A549 (cell line): ENCODE measurements at regions of chr16 and their contacts with region 1.

Region 1: GRCh38 chr16:66924527-66925321 is 611 bp downstream of the RRAD start:
- DNase-seq: peak in 1 of 2 experiments; percentile 81
- ATAC-seq: peak; percentile 55 to 74; a peak in 5 of 6 replicates
- H3K4me3 ChIP-seq: peak overlapping the region; percentile 51
- H3K27ac ChIP-seq: peak overlapping the region; percentile 57 to 79; a peak in 5 of 6 replicates
- H3K4me1 ChIP-seq: peaks cover 23% of the 10 kb centered on the region
- CTCF ChIP-seq: peak; percentile 56
- EP300 ChIP-seq: no peak
- POLR2A ChIP-seq: no peak
- RAD21 ChIP-seq: peak in 1 of 2 experiments; percentile 33; a peak in 1 of 5 replicates

Region 2: GRCh38 chr16:66650707-66651473 is 273.8 kb before region 1 on chr16:
- CTCF ChIA-PET with region 1: no interaction called
- POLR2A ChIA-PET with region 1: no interaction called
- DNase-seq: peak; percentile 79 to 84
- ATAC-seq: peak; percentile 97 to 99
- H3K4me3 ChIP-seq: peak overlapping the region; percentile 43
- H3K27ac ChIP-seq: peak overlapping the region; percentile 56 to 61; a peak in 4 of 6 replicates
- H3K4me1 ChIP-seq: peaks cover 8% of the 10 kb centered on the region; the same call in 2 of the 3 replicates
- CTCF ChIP-seq: peak; percentile 86
- EP300 ChIP-seq: no peak
- POLR2A ChIP-seq: no peak
- RAD21 ChIP-seq: peak; percentile 44 to 61; a peak in 2 of 5 replicates

Region 3: GRCh38 chr16:66880288-66881013 is 44.3 kb before region 1 on chr16 and contains the start of gene PDP2:
- CTCF ChIA-PET with region 1: interaction called, 837 read pairs
- POLR2A ChIA-PET with region 1: interaction called, 3 read pairs
- DNase-seq: peak; percentile 89 to 96
- ATAC-seq: peak; percentile 98 to 100
- H3K4me3 ChIP-seq: peak within 1 kb of the TSS; percentile 74
- H3K27ac ChIP-seq: peak within 1 kb of the TSS; percentile 76 to 88
- H3K4me1 ChIP-seq: peaks cover 6% of the 10 kb centered on the region; the same call in 1 of the 3 replicates
- CTCF ChIP-seq: no peak
- EP300 ChIP-seq: no peak
- POLR2A ChIP-seq: peak; percentile 70
- RAD21 ChIP-seq: no peak
- polyA plus RNA-seq, gene PDP2: 10.0 and 10.7 TPM in 2 replicates

Region 4: DNA sequence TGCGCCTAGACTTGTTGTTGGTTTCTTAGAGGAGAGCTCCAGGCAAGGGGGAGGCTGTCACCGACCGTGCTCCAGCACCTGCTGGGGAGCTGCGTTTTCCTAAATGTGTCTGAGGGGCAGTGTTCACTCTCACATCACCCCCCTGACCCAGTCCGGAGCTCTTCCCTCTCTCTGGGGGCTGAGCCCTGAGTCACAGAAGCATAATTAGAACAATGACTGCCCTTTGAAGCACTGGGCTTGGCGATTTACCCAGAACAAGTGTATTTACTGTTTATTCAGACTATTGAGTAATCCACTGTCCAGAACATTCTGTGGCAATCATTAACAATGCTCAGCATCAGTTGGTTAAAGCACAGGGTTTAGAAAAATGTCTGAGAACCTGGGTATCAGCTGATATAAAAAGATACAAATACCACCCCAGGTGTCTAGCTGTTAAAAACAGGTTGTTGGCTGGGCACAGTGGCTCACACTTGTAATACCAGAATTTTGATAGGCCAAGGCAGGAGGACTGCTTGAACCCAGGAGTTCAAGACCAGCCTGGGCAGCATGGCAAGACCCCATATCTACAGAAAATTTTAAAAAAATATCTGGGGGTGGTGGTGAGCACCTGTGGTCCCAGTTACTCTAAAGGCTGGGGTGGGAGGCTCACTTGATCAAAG is 71.7 kb after region 1 on chr16:
- CTCF ChIA-PET with region 1: no interaction called
- POLR2A ChIA-PET with region 1: no interaction called
- DNase-seq: peak in 1 of 2 experiments; percentile 42
- ATAC-seq: peak in 1 of 2 experiments; percentile 58; a peak in 1 of 6 replicates
- H3K4me3 ChIP-seq: no peak overlapping the region; the same call in 2 of the 3 replicates
- H3K27ac ChIP-seq: peak overlapping the region; percentile 62 to 72; a peak in 5 of 6 replicates
- H3K4me1 ChIP-seq: peaks cover 25% of the 10 kb centered on the region
- CTCF ChIP-seq: no peak
- EP300 ChIP-seq: no peak
- POLR2A ChIP-seq: no peak
- RAD21 ChIP-seq: no peak